HEK293T (cell line): ENCODE measurements at regions of chr15 and their contacts with region 1.

Region 1: GRCh38 chr15:35289024-35289617 is 204.0 kb upstream of the NANOGP8 start:
- DNase-seq: peak; percentile 39

Region 2: DNA sequence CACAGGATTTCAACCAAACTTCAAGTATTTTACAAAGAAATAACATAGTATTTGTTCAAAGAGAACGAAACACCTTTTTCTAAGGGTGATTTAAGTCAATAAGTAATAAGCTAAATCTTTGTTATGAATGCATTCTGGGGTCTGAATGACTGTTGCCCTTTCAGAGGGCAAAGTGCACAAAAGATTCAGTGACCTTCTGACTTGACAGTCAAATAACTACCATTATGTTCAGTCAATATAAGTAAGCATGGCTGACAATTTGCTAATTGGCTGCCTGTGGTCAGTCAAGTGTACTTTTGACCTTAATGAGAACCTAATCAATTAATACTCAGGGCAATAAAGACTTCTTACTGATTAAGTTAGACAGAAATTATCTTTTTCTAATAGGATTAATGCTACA is 70.9 kb before region 1 on chr15:
- CTCF ChIA-PET with region 1: no interaction called
- POLR2A ChIA-PET with region 1: no interaction called
- DNase-seq: no peak

Region 3: GRCh38 chr15:35271371-35272043 is 17.6 kb before region 1 on chr15:
- CTCF ChIA-PET with region 1: no interaction called
- POLR2A ChIA-PET with region 1: no interaction called
- DNase-seq: no peak

Region 4: GRCh38 chr15:35444557-35445204 is 155.6 kb after region 1 on chr15:
- CTCF ChIA-PET with region 1: interaction called, 39 read pairs
- POLR2A ChIA-PET with region 1: no interaction called
- DNase-seq: peak; percentile 19